Activated CD8-positive, alpha-beta T cell treated with anti-CD3 and anti-CD28 coated beads, Interleukin-2, amount 10 ng/mL, durations not matched to agents 7 days and 5 days (primary cell): ENCODE measurements at regions of chr12 and their contacts with region 1.

Region 1: GRCh38 chr12:53321074-53321814 is at the start of gene AAAS:
- DNase-seq: peak; percentile 98
- ATAC-seq: peak; percentile 87
- H3K4me3 Mint-ChIP-seq: peak within 1 kb of the TSS; percentile 92
- H3K27ac Mint-ChIP-seq: peak within 1 kb of the TSS; percentile 96
- H3K4me1 Mint-ChIP-seq: peaks cover 47% of the 10 kb centered on the region
- H3K27me3 Mint-ChIP-seq: no peaks in the 10 kb centered on the region
- total RNA-seq, gene AAAS: 67.5 to 67.9 TPM

Region 2: DNA sequence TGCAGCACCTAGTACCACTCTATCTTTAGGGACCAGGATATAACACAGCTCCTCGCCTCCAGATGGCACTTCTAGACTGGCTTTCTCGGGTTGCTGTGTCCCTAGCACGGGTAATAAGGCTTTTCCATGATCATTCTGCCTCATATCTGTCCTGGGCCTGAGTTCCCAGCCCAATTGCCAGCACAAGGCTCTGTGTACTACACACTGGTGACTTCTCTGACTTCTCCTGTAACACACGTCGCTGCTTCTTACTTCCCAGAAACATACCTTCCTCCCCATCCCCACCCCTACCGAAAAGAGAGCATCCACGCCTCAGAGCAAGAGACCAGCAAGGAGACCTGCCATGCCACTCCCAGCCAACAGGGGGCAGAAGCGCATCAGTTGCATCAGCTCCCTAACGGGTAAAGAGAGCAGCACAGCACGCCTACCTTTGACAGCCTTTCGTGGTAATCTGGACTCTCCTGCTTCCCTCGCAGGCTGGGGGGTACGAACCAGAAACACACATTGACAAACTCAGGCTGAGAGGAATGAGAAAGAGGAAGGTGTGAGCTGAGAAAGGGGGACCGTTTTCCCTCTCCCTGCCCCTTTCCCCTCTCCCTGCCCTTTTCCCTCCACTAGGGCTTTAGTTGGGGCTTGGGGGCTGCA is 161.9 kb before region 1 on chr12:
- CTCF ChIA-PET with region 1: interaction called, 31 read pairs
- POLR2A ChIA-PET with region 1: interaction called, 6 read pairs
- DNase-seq: peak; percentile 95
- ATAC-seq: peak; percentile 99
- H3K4me3 Mint-ChIP-seq: no peak overlapping the region
- H3K27ac Mint-ChIP-seq: peak overlapping the region; percentile 81
- H3K4me1 Mint-ChIP-seq: peaks cover 18% of the 10 kb centered on the region
- H3K27me3 Mint-ChIP-seq: no peaks in the 10 kb centered on the region

Region 3: GRCh38 chr12:53213348-53213747 is 107.9 kb before region 1 on chr12:
- CTCF ChIA-PET with region 1: interaction called, 88 read pairs
- POLR2A ChIA-PET with region 1: no interaction called
- DNase-seq: peak; percentile 88
- ATAC-seq: peak; percentile 64
- H3K4me3 Mint-ChIP-seq: no peak overlapping the region
- H3K27ac Mint-ChIP-seq: peak overlapping the region; percentile 65
- H3K4me1 Mint-ChIP-seq: peaks cover 92% of the 10 kb centered on the region
- H3K27me3 Mint-ChIP-seq: no peaks in the 10 kb centered on the region

Region 4: DNA sequence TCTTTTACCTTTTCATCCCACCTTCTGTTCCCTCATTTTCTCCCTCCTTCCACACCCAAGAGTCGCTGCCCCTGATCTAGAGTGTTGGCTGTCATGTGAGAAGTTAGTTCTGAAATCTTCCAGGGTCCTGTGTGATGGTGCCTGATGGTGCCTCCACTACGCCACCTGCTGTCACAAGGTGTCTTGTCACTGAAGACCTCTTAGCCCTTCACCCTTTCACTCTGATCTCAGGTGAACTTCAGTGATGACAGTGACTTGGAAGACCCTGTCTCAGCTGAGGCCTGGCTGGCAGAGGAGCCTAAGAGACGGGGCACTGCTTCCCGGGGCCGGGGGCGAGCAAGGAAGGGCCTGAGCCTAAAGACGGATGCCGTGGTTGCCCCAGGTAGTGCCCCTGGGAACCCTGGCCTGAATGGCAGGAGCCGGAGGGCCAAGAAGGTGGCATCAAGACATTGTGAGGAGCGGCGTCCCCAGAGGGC is 33.5 kb before region 1 on chr12:
- CTCF ChIA-PET with region 1: interaction called, 15 read pairs
- POLR2A ChIA-PET with region 1: interaction called, 6 read pairs
- DNase-seq: peak; percentile 74
- ATAC-seq: peak; percentile 86
- H3K4me3 Mint-ChIP-seq: no peak overlapping the region
- H3K27ac Mint-ChIP-seq: peak overlapping the region; percentile 22
- H3K4me1 Mint-ChIP-seq: peaks cover 4% of the 10 kb centered on the region
- H3K27me3 Mint-ChIP-seq: no peaks in the 10 kb centered on the region

Region 5: GRCh38 chr12:53352331-53353256 is 31.4 kb after region 1 on chr12:
- CTCF ChIA-PET with region 1: interaction called, 290 read pairs
- POLR2A ChIA-PET with region 1: interaction called, 7 read pairs
- DNase-seq: peak; percentile 92
- ATAC-seq: peak; percentile 99
- H3K4me3 Mint-ChIP-seq: no peak overlapping the region
- H3K27ac Mint-ChIP-seq: peak overlapping the region; percentile 23
- H3K4me1 Mint-ChIP-seq: peaks cover 9% of the 10 kb centered on the region
- H3K27me3 Mint-ChIP-seq: no peaks in the 10 kb centered on the region

Region 6: DNA sequence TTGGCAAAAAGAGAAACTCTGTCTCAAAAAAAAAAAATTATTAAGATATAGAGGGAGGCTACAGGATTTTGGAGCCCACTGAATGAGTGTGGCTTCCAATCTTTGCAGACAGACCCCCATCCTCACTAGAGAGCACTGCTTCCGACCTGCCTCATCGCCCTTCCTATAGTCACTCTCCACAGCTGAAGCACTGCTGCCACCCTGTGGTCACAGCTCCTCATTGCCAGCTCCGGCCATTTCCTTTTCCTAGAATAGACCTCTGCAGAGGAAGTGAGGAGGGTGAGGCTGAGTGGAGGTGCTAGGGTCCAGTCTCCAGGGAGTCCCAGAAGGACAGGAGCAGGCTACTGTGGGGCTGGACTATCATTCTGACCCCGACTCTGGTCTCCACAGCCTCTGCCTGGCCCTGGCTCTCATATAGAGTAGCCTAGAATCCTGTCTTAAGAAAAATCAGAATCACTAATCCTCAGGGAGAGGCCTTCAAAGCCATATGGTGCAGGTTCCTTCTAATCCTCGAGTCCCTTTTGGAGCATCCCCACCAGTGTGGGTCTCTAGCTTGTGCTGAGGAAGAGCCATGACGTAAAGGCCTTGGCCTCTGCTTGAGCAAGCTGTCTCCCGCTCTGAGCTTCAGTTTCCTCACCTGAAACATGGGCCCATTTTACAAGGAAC is 187.4 kb after region 1 on chr12:
- CTCF ChIA-PET with region 1: interaction called, 23 read pairs
- POLR2A ChIA-PET with region 1: interaction called, 3 read pairs
- DNase-seq: peak; percentile 91
- ATAC-seq: peak; percentile 97
- H3K4me3 Mint-ChIP-seq: no peak overlapping the region
- H3K27ac Mint-ChIP-seq: peak overlapping the region; percentile 81
- H3K4me1 Mint-ChIP-seq: peaks cover 18% of the 10 kb centered on the region
- H3K27me3 Mint-ChIP-seq: no peaks in the 10 kb centered on the region